Activated naive CD4-positive, alpha-beta T cell treated with anti-CD3 and anti-CD28 coated beads for 36 hours (primary cell): ENCODE measurements at regions of chr2 and their contacts with region 1.

Region 1: DNA sequence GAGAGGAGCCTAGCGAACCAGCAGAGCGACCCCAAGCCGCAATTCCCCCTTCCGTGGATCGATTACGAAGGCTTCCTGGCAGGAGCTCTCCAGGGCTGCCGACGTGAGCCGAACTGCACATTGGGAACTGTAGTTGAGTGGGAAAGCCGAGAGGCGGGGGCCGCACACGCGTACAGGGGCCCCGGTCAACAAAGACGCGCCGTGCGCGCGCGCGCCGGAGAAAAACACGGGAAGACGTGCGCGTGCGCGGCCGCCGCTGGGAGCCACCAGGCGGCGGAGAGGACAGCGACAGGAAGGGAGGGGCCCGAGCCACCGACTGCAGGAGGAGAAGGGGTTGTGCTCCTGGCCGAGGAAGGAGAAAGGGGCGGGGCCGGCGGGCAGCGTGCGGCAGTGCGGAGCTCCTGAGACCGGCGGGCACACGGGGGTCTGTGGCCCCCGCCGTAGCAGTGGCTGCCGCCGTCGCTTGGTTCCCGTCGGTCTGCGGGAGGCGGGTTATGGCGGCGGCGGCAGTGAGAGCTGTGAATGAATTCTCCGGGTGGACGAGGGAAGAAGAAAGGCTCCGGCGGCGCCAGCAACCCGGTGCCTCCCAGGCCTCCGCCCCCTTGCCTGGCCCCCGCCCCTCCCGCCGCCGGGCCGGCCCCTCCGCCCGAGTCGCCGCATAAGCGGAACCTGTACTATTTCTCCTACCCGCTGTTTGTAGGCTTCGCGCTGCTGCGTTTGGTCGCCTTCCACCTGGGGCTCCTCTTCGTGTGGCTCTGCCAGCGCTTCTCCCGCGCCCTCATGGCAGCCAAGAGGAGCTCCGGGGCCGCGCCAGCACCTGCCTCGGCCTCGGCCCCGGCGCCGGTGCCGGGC is at the start of gene SPAST:
- DNase-seq: peak; percentile 96
- H3K4me3 Mint-ChIP-seq: peak within 1 kb of the TSS; percentile 96
- H3K27ac Mint-ChIP-seq: peak within 1 kb of the TSS; percentile 89
- H3K4me1 Mint-ChIP-seq: peaks cover 24% of the 10 kb centered on the region
- H3K27me3 Mint-ChIP-seq: no peaks in the 10 kb centered on the region
- total RNA-seq, gene SPAST: 12.0 to 12.8 TPM

Region 2: GRCh38 chr2:31950946-31951562 is 112.5 kb before region 1 on chr2:
- CTCF ChIA-PET with region 1: no interaction called
- intact Hi-C with region 1: loop called (anchors 2 kb)
- DNase-seq: peak; percentile 24
- H3K4me3 Mint-ChIP-seq: no peak overlapping the region
- H3K27ac Mint-ChIP-seq: peak overlapping the region; percentile 41
- H3K4me1 Mint-ChIP-seq: peaks cover 40% of the 10 kb centered on the region
- H3K27me3 Mint-ChIP-seq: no peaks in the 10 kb centered on the region

Region 3: DNA sequence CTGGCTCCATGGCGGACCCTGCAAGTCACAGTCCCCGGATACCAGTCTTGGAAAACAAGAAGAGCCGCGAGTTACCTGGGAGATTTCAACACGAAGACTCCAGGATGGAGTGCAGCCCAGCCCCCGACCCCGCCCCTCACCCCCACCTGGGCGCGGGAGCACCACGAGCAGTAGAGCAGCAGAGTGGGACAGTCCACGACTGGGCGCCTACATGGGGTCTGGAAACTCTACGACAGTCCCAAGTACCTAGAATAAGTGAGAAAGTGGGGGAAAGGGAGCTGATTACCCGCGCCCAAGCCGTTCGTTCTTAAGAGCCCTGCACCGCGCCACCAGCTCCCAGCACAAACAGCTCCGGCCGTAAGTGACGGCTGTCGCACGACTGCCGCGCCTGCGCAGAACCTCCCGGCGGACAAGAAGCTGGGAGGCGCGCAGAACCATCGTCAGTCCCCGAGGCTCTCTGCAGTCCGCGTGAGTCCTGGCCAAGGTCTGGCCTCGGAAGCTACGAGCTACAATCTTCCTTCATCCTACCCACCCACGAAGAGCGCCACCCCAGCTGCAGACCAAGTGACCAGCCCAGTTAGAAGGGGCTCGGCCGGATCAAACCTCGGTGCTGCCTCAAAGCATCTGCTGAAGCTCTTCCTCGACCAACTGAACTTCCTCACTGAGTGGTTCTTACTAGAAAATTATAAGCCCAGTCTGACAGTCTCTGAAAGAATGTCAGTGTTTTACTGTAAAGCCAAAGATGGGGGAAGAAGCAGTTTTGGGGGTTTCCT is 23.9 kb before region 1 on chr2 and contains the start of gene DPY30:
- CTCF ChIA-PET with region 1: interaction called, 6 read pairs
- intact Hi-C with region 1: loop called (anchors 1 kb)
- DNase-seq: peak; percentile 93
- H3K4me3 Mint-ChIP-seq: peak within 1 kb of the TSS; percentile 84
- H3K27ac Mint-ChIP-seq: peak within 1 kb of the TSS; percentile 93
- H3K4me1 Mint-ChIP-seq: peaks cover 16% of the 10 kb centered on the region
- H3K27me3 Mint-ChIP-seq: no peaks in the 10 kb centered on the region
- total RNA-seq, gene DPY30: 80.1 to 88.5 TPM

Region 4: GRCh38 chr2:32168513-32168912 is 105.0 kb after region 1 on chr2:
- CTCF ChIA-PET with region 1: no interaction called
- intact Hi-C with region 1: loop called (anchors 1 kb)
- DNase-seq: no peak
- H3K4me3 Mint-ChIP-seq: no peak overlapping the region
- H3K27ac Mint-ChIP-seq: no peak overlapping the region
- H3K4me1 Mint-ChIP-seq: peaks cover 46% of the 10 kb centered on the region
- H3K27me3 Mint-ChIP-seq: no peaks in the 10 kb centered on the region

Region 5: DNA sequence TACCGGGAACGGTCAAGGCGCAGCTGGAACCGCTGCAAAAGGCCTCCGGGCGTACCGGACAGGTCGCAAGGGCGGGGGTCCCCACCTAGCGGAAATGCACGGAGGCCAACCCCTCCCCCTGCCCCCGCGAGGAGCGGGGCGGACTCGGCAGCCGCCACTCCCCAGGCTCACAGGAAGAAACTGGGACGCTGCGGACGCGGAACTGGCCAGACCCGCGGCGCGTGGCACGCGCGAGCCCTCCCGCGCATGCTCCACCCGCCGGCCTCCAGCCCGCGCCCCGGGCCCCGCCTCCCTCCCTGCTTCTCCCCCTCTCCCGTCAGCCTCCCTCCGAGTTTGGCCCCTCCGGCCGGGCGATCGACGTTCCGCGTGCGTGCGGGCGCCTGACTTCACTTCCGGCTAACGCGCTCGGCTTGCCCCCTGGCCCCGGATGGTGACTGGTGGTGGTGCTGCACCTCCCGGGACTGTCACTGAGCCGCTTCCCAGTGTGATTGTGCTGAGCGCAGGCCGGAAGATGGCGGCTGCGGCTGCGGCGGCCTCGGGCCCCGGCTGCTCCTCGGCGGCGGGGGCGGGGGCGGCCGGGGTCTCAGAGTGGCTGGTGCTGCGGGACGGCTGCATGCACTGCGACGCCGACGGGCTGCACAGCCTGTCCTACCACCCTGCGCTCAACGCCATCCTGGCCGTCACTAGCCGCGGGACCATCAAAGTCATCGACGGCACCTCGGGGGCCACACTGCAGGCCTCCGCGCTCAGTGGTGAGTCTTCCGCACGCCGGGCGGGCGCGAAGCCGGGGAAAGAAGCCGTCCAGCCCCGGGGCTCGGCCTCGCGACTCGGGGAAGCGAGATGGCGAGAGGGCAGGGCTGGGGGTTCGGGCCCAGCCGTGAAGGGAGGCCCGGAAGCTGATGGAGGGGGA is 293.5 kb after region 1 on chr2 and contains the start of gene BIRC6:
- CTCF ChIA-PET with region 1: no interaction called
- intact Hi-C with region 1: loop called (anchors 1 kb)
- DNase-seq: peak; percentile 97
- H3K4me3 Mint-ChIP-seq: peak within 1 kb of the TSS; percentile 78
- H3K27ac Mint-ChIP-seq: peak within 1 kb of the TSS; percentile 85
- H3K4me1 Mint-ChIP-seq: peaks cover 31% of the 10 kb centered on the region
- H3K27me3 Mint-ChIP-seq: no peaks in the 10 kb centered on the region
- total RNA-seq, gene BIRC6: 51.4 to 52.9 TPM

Region 6: DNA sequence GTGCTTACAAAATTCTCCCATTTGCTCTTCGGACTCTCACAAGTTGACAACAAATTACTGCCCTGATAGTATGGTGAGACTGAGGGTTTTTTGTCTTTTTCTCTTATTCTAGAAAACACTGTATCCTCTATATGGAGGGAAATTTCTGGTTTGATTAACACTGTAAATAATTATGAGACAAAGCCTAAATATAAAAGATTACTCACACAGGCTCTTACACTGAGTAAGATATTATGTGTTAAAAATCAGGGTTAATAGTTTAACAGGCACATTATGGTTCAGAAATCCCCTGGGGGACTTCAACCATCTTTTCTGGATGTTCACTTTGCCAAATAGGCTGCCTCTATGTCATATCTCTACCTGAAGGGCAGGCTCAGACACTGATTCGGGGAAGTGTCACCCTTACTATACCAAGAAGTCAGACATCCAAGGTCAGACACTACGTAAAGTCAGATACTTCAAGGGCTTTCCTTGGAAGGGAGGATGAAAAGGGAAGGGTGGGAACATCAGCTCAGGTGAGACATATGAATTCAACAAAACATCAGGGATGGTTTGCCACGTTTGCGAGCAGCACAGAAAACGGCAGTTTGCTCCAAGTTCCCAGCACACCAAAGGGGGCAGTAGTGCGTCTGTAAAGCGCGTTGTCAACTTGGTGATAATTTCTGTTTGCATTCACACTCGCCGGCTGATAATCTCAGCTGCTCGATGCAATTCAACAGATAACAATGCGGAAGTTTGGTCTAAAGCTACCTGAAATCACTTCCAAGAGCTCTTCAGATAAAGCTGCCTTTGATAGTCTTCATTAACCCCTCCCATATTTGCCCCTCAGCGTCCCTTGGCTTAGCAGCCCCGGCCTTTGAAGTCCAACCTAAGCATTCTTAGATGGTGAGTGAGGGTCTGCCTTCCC is 1411.9 kb after region 1 on chr2:
- CTCF ChIA-PET with region 1: no interaction called
- intact Hi-C with region 1: loop called (anchors 10 kb)
- DNase-seq: peak; percentile 89
- H3K4me3 Mint-ChIP-seq: peak overlapping the region; percentile 81
- H3K27ac Mint-ChIP-seq: peak overlapping the region; percentile 91
- H3K4me1 Mint-ChIP-seq: peaks cover 25% of the 10 kb centered on the region
- H3K27me3 Mint-ChIP-seq: no peaks in the 10 kb centered on the region